H1 (cell line): ENCODE measurements at regions of chr15 and their contacts with region 1.

Region 1: DNA sequence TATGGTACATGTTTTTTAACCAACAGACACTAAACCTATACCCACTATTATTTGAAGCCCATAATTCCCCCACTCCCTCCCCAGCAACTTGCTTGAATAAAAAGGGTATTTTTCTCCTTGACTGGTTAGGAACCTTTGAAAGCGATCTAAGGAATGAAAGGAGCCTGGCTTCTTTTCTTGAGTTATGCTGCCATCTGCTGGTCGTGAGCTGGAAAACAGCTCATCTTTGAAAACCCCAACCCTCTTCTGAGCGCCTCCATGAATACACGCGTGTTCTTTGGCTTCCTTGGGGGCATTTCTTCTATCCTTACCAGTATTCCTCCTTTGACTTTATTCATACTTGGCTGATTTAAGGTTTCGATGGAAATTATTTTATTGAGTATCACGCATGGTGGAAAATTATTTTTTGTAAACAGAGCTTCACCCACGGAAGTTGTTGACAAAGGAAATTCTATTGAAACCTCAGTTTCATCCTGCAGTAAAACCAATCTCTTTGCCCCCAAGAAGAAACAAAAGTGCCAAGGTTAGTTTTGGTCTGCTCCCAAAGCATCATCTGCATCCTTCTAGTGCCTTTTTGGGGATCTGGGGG is 171.6 kb downstream of the SV2B start:
- DNase-seq: peak in 1 of 2 experiments; percentile 69
- H3K4me3 ChIP-seq: no peak overlapping the region
- H3K27ac ChIP-seq: no peak overlapping the region
- H3K4me1 ChIP-seq: no peaks in the 10 kb centered on the region
- H3K27me3 ChIP-seq: no peaks in the 10 kb centered on the region
- CTCF ChIP-seq: peak; percentile 25 to 85 (median 76)
- EP300 ChIP-seq: no peak
- POLR2A ChIP-seq: no peak
- RAD21 ChIP-seq: peak; percentile 94 to 97

Region 2: GRCh38 chr15:90954712-90955671 is 316.7 kb before region 1 on chr15 and contains the start of gene RCCD1:
- CTCF ChIA-PET with region 1: interaction called, 20 read pairs
- POLR2A ChIA-PET with region 1: no interaction called
- DNase-seq: peak; percentile 85 to 92
- H3K4me3 ChIP-seq: peak within 1 kb of the TSS; percentile 46 to 72 (median 58)
- H3K27ac ChIP-seq: peak within 1 kb of the TSS; percentile 92
- H3K4me1 ChIP-seq: peaks cover 0 to 15% (median 8%) of the 10 kb centered on the region in 4 experiments; a peak in 6 of 7 replicates
- H3K27me3 ChIP-seq: no peaks in the 10 kb centered on the region
- CTCF ChIP-seq: no peak
- EP300 ChIP-seq: no peak
- POLR2A ChIP-seq: peak; percentile 79 to 95
- RAD21 ChIP-seq: no peak
- total RNA-seq, gene RCCD1: 16.2 and 18.8 TPM in 2 replicates

Region 3: DNA sequence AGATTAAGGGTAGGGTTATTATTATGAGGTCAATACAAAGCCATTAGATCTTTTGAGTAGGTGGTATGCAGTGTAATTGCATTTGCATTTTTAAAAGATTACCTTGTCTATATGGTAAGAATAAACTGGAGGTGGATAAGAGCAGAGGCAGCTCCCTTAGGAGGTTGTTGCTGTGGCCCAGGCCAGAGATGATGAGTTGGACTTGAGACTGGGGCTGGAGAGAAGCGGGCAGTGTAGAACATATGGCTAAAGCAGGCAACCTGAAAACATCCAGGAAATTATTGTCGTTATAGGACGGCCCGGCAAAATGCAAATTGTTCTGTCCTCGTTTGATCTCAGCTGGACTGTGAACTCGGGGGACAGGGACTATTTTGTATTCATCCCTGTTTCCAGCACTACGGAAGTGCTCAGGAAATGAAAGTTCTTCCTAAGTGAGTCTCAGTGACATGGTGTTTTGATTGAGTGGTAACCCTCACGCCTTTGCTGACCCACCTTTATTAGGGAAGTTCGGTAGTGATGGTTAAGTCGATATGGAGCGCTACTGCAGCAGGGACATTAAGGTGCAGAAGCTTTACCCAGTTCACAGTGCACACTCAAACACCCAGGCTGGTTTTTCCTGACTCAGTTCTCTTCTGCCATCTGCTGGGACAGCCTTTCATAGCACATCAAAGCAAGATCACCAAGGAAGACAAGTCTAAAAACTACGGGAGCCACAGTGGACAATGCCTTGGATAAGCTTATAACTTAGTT is 222.1 kb before region 1 on chr15:
- CTCF ChIA-PET with region 1: interaction called, 10 read pairs
- POLR2A ChIA-PET with region 1: interaction called, 3 read pairs
- DNase-seq: no peak
- H3K4me3 ChIP-seq: no peak overlapping the region
- H3K27ac ChIP-seq: no peak overlapping the region
- H3K4me1 ChIP-seq: no peaks in the 10 kb centered on the region
- H3K27me3 ChIP-seq: no peaks in the 10 kb centered on the region
- CTCF ChIP-seq: peak; percentile 29 to 76 (median 67)
- EP300 ChIP-seq: no peak
- POLR2A ChIP-seq: no peak
- RAD21 ChIP-seq: peak; percentile 77 to 80

Region 4: GRCh38 chr15:91238644-91239425 is 32.8 kb before region 1 on chr15:
- CTCF ChIA-PET with region 1: interaction called, 15 read pairs
- POLR2A ChIA-PET with region 1: no interaction called
- DNase-seq: no peak
- H3K4me3 ChIP-seq: no peak overlapping the region
- H3K27ac ChIP-seq: no peak overlapping the region
- H3K4me1 ChIP-seq: no peaks in the 10 kb centered on the region
- H3K27me3 ChIP-seq: no peaks in the 10 kb centered on the region
- CTCF ChIP-seq: no peak
- EP300 ChIP-seq: no peak
- POLR2A ChIP-seq: no peak
- RAD21 ChIP-seq: no peak

Region 5: GRCh38 chr15:91249591-91249990 is 22.1 kb before region 1 on chr15:
- CTCF ChIA-PET with region 1: interaction called, 78 read pairs
- POLR2A ChIA-PET with region 1: no interaction called
- DNase-seq: no peak
- H3K4me3 ChIP-seq: no peak overlapping the region
- H3K27ac ChIP-seq: no peak overlapping the region
- H3K4me1 ChIP-seq: no peaks in the 10 kb centered on the region
- H3K27me3 ChIP-seq: no peaks in the 10 kb centered on the region
- CTCF ChIP-seq: no peak
- EP300 ChIP-seq: no peak
- POLR2A ChIP-seq: no peak
- RAD21 ChIP-seq: no peak

Region 6: GRCh38 chr15:91258425-91258779 is 13.3 kb before region 1 on chr15:
- CTCF ChIA-PET with region 1: interaction called, 78 read pairs
- POLR2A ChIA-PET with region 1: no interaction called
- DNase-seq: no peak
- H3K4me3 ChIP-seq: no peak overlapping the region
- H3K27ac ChIP-seq: no peak overlapping the region
- H3K4me1 ChIP-seq: no peaks in the 10 kb centered on the region
- H3K27me3 ChIP-seq: peaks cover 0 to 3% (median 0%) of the 10 kb centered on the region in 4 experiments; a peak in 1 of 7 replicates
- CTCF ChIP-seq: peak; percentile 33 to 49 (median 33)
- EP300 ChIP-seq: no peak
- POLR2A ChIP-seq: no peak
- RAD21 ChIP-seq: peak in 1 of 2 experiments; percentile 36; a peak in 1 of 4 replicates

Region 7: GRCh38 chr15:91284758-91285466 is 13.3 kb after region 1 on chr15:
- CTCF ChIA-PET with region 1: interaction called, 10 read pairs
- POLR2A ChIA-PET with region 1: no interaction called
- DNase-seq: no peak
- H3K4me3 ChIP-seq: no peak overlapping the region
- H3K27ac ChIP-seq: no peak overlapping the region
- H3K4me1 ChIP-seq: no peaks in the 10 kb centered on the region; a peak in 1 of 7 replicates
- H3K27me3 ChIP-seq: no peaks in the 10 kb centered on the region
- CTCF ChIP-seq: no peak
- EP300 ChIP-seq: no peak
- POLR2A ChIP-seq: no peak
- RAD21 ChIP-seq: no peak

Region 8: DNA sequence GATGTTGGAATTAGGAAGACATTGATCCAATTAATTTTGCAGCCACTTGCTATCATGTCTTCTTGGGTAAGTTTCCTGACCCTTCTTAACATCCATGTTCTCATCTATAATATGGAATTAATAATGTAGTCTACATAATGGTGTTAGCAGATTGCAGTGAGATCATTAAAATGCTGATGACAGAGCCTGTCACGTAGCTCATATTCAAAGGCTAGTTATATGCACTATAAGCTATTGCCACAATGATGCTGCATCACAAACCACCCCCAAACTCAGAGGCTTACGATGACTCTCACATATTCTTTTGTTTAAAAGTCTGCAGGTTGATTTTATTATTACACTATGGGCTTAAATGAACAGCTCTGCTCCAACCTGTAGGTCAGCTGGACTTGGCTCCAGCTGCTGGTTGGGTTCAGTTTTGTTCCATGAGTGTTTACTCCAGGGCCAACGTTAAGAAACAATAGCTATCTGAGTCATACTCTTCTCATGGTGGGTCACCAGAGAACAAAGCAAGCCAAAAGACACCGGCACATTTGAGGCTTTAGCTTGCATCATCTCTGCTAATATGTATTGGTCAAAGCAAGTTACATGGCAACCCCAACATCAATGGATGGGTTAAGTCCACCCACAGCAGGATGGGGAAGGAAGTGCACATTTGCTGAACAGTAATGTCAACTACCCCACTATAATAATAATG is 331.9 kb after region 1 on chr15:
- CTCF ChIA-PET with region 1: no interaction called
- POLR2A ChIA-PET with region 1: no interaction called
- DNase-seq: no peak
- H3K4me3 ChIP-seq: no peak overlapping the region
- H3K27ac ChIP-seq: no peak overlapping the region
- H3K4me1 ChIP-seq: no peaks in the 10 kb centered on the region; a peak in 1 of 7 replicates
- H3K27me3 ChIP-seq: no peaks in the 10 kb centered on the region
- CTCF ChIP-seq: no peak
- EP300 ChIP-seq: no peak
- POLR2A ChIP-seq: no peak
- RAD21 ChIP-seq: no peak